ENCODE measurements at regions of chr4 and their contacts with region 1.

Region 1: DNA sequence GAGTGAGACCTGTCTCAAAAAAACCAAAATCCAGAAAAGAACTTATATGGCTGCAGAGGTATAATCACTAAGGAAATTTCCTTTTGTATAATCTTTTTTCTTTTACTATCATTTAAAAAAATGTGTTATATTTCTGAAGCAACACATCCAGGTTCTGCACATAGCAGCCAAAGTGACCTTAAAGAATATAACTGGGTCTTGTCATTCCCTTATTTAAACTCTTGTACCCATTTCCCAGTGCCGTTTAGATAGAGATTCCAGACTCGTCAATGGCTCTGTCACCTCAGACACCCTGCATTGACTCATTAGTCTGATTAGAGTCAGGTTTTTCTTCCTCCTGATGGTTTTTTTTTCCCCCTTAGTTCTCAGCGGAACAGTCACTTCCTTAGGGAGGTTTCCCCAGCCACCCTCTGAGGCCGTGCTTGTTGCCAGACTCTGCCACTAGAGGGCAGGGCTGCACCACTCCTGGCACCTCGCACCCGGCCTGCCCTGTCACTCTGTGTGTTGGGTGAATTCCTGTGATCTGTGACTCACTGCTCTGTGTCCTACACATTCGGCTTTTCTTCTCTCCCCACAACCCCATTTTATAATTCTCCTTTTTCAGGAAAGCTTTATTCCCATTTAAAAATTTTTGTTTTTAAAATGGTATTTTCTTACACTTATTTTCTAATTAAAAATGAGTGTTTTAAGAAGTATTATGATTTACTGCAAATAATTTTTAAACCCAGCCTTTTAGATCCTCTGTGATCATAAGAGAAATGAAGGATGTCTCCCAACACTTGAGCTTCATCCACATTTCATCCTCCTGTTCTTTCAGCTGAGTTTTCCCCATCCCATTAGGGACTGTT is 32.1 kb downstream of the HTT start:
- DNase-seq: peak; percentile 79 to 89 (median 88)
- H3K4me3 ChIP-seq: no peak overlapping the region
- H3K27ac ChIP-seq: no peak overlapping the region
- H3K4me1 ChIP-seq: peaks cover 13% of the 10 kb centered on the region
- H3K27me3 ChIP-seq: no peaks in the 10 kb centered on the region
- CTCF ChIP-seq: peak; percentile 84 to 89 (median 84)
- EP300 ChIP-seq: no peak
- POLR2A ChIP-seq: no peak

Region 2: GRCh38 chr4:2712261-2712842 is 394.2 kb before region 1 on chr4:
- intact Hi-C with region 1: no loop called
- DNase-seq: peak in 1 of 5 donors; percentile 19
- H3K4me3 ChIP-seq: no peak overlapping the region
- H3K27ac ChIP-seq: no peak overlapping the region
- H3K4me1 ChIP-seq: no peaks in the 10 kb centered on the region
- H3K27me3 ChIP-seq: no peaks in the 10 kb centered on the region
- CTCF ChIP-seq: no peak
- EP300 ChIP-seq: no peak
- POLR2A ChIP-seq: no peak

Region 3: DNA sequence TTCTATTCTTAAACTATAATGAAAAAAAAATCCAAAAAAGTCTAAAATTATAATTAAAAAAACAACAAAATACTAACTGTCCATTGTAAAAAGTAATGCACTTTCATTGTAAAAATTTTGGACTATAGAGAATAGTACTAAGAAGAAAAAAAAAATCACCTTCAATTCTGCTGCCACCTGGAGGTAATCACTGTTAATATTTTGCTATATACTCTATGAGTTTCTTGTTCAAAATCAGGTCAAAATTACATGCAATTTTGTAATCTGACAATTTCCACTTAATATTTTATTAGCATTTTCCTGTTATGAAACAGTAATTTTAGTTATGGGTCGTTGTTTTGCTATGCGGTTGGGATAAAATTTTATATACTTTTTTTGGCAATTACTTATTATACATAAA is 29.9 kb after region 1 on chr4:
- intact Hi-C with region 1: loop called in 2 of 4 experiments (anchors 5 kb)
- DNase-seq: no peak
- H3K4me3 ChIP-seq: no peak overlapping the region
- H3K27ac ChIP-seq: no peak overlapping the region
- H3K4me1 ChIP-seq: peaks cover 1% of the 10 kb centered on the region
- H3K27me3 ChIP-seq: no peaks in the 10 kb centered on the region
- CTCF ChIP-seq: no peak
- EP300 ChIP-seq: no peak
- POLR2A ChIP-seq: no peak

Region 4: GRCh38 chr4:3442959-3443749 is 336.6 kb after region 1 on chr4:
- intact Hi-C with region 1: loop called in 2 of 4 experiments (anchors 5 to 10 kb)
- DNase-seq: peak in 4 of 5 donors; percentile 54 to 73 (median 64)
- H3K4me3 ChIP-seq: no peak overlapping the region
- H3K27ac ChIP-seq: no peak overlapping the region
- H3K4me1 ChIP-seq: peaks cover 3% of the 10 kb centered on the region
- H3K27me3 ChIP-seq: no peaks in the 10 kb centered on the region
- CTCF ChIP-seq: peak; percentile 93 to 96 (median 95)
- EP300 ChIP-seq: no peak
- POLR2A ChIP-seq: no peak